Activated T-helper 2 cell treated with anti-CD3 and anti-CD28 coated beads, Interferon-gamma antibody, Interleukin-2, Interleukin-4, amounts not matched to agents 10 μg/mL and 5 μg/mL and 100 μg/mL, durations not matched to agents 14 hours and 24 hours and 36 hours (primary cell): ENCODE measurements at regions of chr1 and their contacts with region 1.

Region 1: DNA sequence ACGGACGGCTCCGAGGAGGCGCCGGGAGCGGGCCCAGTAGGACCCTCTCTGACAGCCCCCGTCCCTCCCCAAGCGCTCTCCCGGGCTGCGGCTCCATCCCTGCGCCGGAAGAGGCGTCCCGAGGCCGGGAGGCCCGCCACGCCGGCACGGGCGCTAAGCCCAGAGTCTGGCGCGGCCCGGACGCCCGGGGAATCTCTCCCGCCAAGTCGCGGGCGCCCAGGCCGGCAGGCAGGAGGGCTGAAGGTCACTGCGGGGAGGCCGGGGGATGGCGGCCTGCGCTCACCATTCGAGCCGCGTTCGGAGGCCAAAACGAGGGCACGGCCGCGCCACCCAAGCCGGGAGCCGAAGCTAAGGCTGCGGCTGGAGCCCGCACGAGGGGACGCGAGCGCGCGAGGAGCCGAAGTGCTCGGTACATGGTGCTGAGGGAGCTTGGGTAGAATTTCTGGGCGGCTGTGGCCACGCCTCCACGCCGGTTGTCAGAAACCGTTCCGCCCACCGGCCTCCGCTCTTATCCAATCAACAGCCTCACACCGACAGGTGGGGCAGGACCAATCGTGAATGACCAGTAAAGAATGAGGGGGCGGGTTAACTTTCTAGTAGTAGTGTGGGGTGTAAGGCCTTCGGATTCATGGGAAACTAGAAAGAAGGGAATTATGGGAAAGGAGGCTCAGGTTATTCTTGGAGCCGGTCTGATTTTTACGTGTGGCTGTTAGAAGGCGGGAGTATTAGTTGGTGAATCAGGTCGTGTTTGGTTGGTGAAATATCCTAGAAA is at the start of gene FH:
- DNase-seq: peak; percentile 92
- H3K4me3 Mint-ChIP-seq: peak within 1 kb of the TSS; percentile 90
- H3K27ac Mint-ChIP-seq: peak within 1 kb of the TSS; percentile 79
- H3K4me1 Mint-ChIP-seq: peaks cover 21% of the 10 kb centered on the region
- H3K27me3 Mint-ChIP-seq: peaks cover 26% of the 10 kb centered on the region
- total RNA-seq, gene FH: 96.5 and 102 TPM in 2 replicates

Region 2: DNA sequence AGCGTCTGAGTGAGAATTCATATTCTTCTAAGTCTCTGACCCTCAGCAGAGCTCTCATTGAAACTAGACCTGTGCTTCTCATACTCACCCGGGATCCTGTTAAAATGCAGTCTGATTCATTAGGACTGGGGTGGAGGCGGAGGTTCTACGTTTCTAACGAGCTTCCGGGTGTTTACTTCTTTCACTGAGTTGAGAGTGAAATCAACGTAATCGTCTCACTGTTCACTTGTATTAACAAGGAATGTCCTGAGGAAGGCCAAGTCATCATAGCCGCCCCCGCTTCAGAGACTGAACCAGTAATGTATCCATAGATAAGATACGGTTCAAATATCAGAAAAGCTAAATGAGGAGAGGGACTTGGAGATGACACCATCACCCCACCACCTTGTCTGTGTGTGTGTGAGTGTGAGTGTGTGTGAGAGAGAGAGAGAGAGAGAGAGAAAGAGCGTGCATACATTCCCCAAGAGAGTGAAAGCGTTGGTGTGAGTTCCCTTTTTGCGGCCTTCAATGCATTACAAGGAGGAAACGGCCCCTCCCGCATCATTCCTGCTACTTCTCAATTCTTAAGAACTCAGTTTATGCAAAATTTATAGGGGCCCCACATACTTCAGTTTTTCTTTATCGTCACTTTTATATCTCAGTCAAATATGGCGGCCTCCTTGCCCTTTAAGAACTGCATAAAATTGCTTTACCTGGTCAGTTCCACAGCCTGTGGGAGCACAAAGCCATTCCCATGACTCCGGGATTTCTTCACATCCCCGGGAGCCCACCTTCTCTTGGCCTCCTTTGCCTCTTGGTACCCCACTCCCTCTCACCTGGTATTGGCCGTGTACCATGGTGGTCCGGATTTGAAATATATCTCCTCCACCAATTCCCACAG is 32.5 kb after region 1 on chr1:
- intact Hi-C with region 1: no loop called
- DNase-seq: peak; percentile 19
- H3K4me3 Mint-ChIP-seq: peak overlapping the region; percentile 78
- H3K27ac Mint-ChIP-seq: peak overlapping the region; percentile 96
- H3K4me1 Mint-ChIP-seq: peaks cover 21% of the 10 kb centered on the region
- H3K27me3 Mint-ChIP-seq: peaks cover 10% of the 10 kb centered on the region

Region 3: DNA sequence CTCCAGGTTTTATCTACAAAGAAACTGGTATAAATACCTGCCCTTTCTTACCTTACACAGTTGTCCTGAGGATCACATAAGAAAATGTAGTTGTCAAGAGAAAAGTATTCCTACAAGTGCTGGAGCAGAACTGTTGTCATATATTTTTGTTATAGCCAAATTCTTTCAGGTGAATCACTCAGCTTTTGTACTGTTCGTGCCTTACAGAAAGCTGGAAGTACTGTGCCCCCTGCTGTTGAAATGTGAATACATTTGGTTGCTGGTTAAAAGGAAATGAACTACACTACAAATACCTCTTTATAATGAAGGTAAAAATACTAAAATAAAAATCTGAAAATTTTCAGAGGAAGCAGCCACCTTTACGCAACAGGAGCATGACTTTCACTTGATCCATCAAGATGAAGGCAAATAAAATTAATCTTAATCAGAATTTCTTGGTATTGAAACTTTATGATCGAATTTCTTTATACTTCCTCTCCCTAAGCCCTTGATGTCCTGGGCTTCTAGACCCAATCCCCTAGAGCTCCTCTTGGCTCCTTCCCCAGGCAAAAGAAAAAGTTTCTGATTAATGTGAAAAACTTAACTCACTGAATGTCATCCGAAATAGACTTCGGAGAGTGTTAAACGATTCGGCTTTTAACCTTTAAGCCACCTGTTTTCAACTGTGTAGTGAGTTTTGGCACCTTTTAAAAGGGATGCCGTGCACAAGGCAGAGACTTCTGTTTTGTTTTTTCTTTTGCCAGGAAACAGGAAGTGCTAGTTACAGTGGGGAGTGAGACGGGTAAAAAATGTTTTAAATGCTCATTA is 108.2 kb after region 1 on chr1:
- intact Hi-C with region 1: loop called (anchors 2 kb)
- DNase-seq: no peak
- H3K4me3 Mint-ChIP-seq: peak overlapping the region; percentile 27
- H3K27ac Mint-ChIP-seq: peak overlapping the region; percentile 39
- H3K4me1 Mint-ChIP-seq: peaks cover 14% of the 10 kb centered on the region
- H3K27me3 Mint-ChIP-seq: no peaks in the 10 kb centered on the region